Astrocyte of the cerebellum (primary cell): ENCODE measurements at regions of chr11 and their contacts with region 1.

Region 1: GRCh38 chr11:124193221-124194010 is 10.3 kb downstream of the OR10D3 start:
- DNase-seq: no peak
- H3K4me3 ChIP-seq: no peak overlapping the region
- CTCF ChIP-seq: no peak

Region 2: GRCh38 chr11:124080327-124081001 is 113.0 kb before region 1 on chr11:
- in situ Hi-C with region 1: loop called (anchors 5 kb)
- DNase-seq: no peak
- H3K4me3 ChIP-seq: no peak overlapping the region
- CTCF ChIP-seq: no peak

Region 3: GRCh38 chr11:124150684-124151083 is 42.7 kb before region 1 on chr11:
- in situ Hi-C with region 1: no loop called
- DNase-seq: no peak
- H3K4me3 ChIP-seq: no peak overlapping the region
- CTCF ChIP-seq: no peak